AG04450 (cell line): ENCODE measurements at regions of chr5 and their contacts with region 1.

Region 1: GRCh38 chr5:151447174-151448037 is at the start of gene SLC36A1:
- DNase-seq: peak; percentile 70
- H3K4me3 ChIP-seq: peak within 1 kb of the TSS; percentile 73
- H3K27ac ChIP-seq: peak within 1 kb of the TSS; percentile 39
- H3K27me3 ChIP-seq: no peaks in the 10 kb centered on the region
- CTCF ChIP-seq: peak; percentile 98
- polyA plus RNA-seq, gene SLC36A1: 22.2 and 22.3 TPM in 2 replicates

Region 2: GRCh38 chr5:151420127-151420526 is 27.3 kb before region 1 on chr5:
- CTCF ChIA-PET with region 1: no interaction called
- POLR2A ChIA-PET with region 1: no interaction called
- DNase-seq: no peak
- H3K4me3 ChIP-seq: no peak overlapping the region
- H3K27ac ChIP-seq: no peak overlapping the region
- H3K27me3 ChIP-seq: peaks cover 3% of the 10 kb centered on the region
- CTCF ChIP-seq: no peak

Region 3: GRCh38 chr5:151432210-151432609 is 15.2 kb before region 1 on chr5:
- CTCF ChIA-PET with region 1: interaction called, 12 read pairs
- POLR2A ChIA-PET with region 1: no interaction called
- DNase-seq: no peak
- H3K4me3 ChIP-seq: no peak overlapping the region
- H3K27ac ChIP-seq: no peak overlapping the region
- H3K27me3 ChIP-seq: peaks cover 2% of the 10 kb centered on the region
- CTCF ChIP-seq: no peak

Region 4: GRCh38 chr5:151461312-151461711 is 13.9 kb after region 1 on chr5:
- CTCF ChIA-PET with region 1: interaction called, 53 read pairs
- POLR2A ChIA-PET with region 1: interaction called, 4 read pairs
- DNase-seq: no peak
- H3K4me3 ChIP-seq: no peak overlapping the region
- H3K27ac ChIP-seq: no peak overlapping the region
- H3K27me3 ChIP-seq: no peaks in the 10 kb centered on the region
- CTCF ChIP-seq: no peak

Region 5: DNA sequence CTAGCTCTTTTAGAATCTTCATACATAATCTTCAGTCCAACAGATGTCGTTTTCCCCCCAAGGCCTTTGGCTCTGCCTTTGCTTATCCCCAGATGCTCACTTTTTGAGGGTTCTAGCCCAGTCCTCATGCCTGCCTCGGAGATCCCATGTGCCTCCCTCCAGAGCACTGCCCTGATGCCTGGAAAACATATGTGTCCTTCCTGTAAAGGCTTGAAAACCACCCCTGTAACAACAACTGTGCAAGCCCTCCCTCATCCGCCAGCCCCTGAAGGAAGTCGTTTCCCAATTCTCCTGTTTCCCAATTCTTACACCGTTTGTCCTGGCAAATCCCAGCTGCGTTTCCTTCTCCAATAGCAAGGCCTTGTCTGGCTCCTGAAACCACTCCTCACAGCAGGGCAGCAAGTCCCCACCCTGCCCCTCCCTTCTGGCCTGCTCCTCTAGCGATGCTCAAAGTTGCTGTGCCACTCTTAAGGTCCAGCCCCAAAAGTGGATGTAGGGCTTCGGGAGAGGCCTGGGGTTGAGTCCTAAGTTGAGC is 52.2 kb after region 1 on chr5:
- CTCF ChIA-PET with region 1: interaction called, 17 read pairs
- POLR2A ChIA-PET with region 1: interaction called, 6 read pairs
- DNase-seq: no peak
- H3K4me3 ChIP-seq: no peak overlapping the region
- H3K27ac ChIP-seq: no peak overlapping the region
- H3K27me3 ChIP-seq: no peaks in the 10 kb centered on the region
- CTCF ChIP-seq: no peak

Region 6: DNA sequence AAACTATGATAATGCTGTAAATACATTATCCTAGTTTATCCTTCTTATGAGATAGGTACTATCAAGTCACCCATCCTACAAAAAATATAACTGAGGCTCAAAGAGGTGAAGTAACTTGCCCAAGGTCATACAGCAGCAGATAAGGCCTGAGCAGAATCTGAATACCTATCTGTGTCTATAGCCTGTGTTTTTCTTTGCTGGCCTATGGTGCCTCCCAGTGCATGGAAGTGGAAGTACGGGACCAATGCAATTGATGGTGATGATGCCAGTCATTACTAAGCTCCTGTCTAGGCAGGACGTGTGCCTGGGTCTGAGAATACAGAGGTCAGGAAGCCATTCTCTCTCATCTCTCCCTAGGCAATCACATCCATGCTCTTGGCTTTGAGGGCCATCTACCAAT is 75.9 kb after region 1 on chr5:
- CTCF ChIA-PET with region 1: interaction called, 51 read pairs
- POLR2A ChIA-PET with region 1: no interaction called
- DNase-seq: no peak
- H3K4me3 ChIP-seq: no peak overlapping the region
- H3K27ac ChIP-seq: no peak overlapping the region
- H3K27me3 ChIP-seq: peaks cover 7% of the 10 kb centered on the region
- CTCF ChIP-seq: peak; percentile 77

Region 7: GRCh38 chr5:151758430-151759241 is 311.2 kb after region 1 on chr5 and contains the start of gene ATOX1:
- CTCF ChIA-PET with region 1: no interaction called
- POLR2A ChIA-PET with region 1: no interaction called
- DNase-seq: peak; percentile 62
- H3K4me3 ChIP-seq: peak within 1 kb of the TSS; percentile 88
- H3K27ac ChIP-seq: peak within 1 kb of the TSS; percentile 68
- H3K27me3 ChIP-seq: no peaks in the 10 kb centered on the region
- CTCF ChIP-seq: no peak; the same call in 1 of the 2 replicates
- polyA plus RNA-seq, gene ATOX1: 138 and 164 TPM in 2 replicates